Psoas muscle (tissue), 8 donors: ENCODE measurements at regions of chr10 and their contacts with region 1.

Region 1: DNA sequence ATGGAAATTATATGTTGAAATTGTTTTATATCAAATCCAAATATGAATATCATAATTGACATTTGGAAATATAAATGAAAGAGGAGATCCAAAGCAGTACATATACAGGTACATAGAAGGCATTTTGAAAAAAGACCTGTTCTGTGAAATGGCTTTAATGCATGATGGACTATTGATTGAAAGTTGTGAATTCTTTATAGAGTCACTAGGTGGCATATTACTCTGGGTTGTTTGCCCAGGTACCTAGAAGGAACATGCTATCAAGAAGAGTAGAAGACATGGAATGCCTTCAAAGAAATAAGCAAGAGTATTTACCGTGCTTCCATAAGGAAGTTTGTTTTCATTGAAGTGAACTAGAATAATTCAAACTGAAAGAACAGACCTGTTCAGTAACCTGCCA is 160.0 kb upstream of the ANK3 start:
- DNase-seq: no peak
- ATAC-seq: peak in 3 of 4 donors; percentile 55 to 84 (median 67)
- H3K4me3 ChIP-seq: no peak overlapping the region
- H3K27ac ChIP-seq: no peak overlapping the region
- H3K4me1 ChIP-seq: no peaks in the 10 kb centered on the region
- H3K27me3 ChIP-seq: no peaks in the 10 kb centered on the region
- CTCF ChIP-seq: peak; percentile 59

Region 2: GRCh38 chr10:60444494-60445064 is 105.1 kb before region 1 on chr10:
- intact Hi-C with region 1: loop called in 1 of 2 experiments (anchors 5 kb)
- DNase-seq: no peak
- ATAC-seq: no peak
- H3K4me3 ChIP-seq: no peak overlapping the region
- H3K27ac ChIP-seq: no peak overlapping the region
- H3K4me1 ChIP-seq: peaks cover 18% of the 10 kb centered on the region
- H3K27me3 ChIP-seq: no peaks in the 10 kb centered on the region
- CTCF ChIP-seq: peak; percentile 53

Region 3: DNA sequence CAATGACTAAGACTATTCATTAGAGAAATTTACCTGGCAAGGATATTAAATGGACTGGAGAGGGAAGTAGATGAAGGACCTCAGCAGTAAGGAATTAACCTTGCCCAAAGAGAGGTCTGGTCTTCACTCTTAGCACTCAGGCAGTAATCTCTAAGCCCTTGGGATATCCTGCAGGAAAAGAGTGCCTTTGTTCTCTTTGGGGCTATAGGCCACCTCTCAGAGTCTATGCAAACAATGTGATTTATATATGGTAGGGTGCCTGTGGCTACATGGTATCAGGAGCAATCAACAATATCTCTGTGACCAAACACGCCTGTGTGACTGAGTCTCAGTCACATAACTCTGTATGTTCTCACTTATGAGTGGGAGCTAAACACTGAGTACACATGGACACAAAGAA is 73.9 kb after region 1 on chr10:
- intact Hi-C with region 1: loop called in 1 of 2 experiments (anchors 5 kb)
- DNase-seq: no peak
- ATAC-seq: no peak
- H3K4me3 ChIP-seq: no peak overlapping the region
- H3K27ac ChIP-seq: no peak overlapping the region
- H3K4me1 ChIP-seq: no peaks in the 10 kb centered on the region
- H3K27me3 ChIP-seq: no peaks in the 10 kb centered on the region
- CTCF ChIP-seq: no peak

Region 4: GRCh38 chr10:60646966-60647796 is 97.5 kb after region 1 on chr10:
- intact Hi-C with region 1: loop called (anchors 2 to 5 kb)
- DNase-seq: no peak
- ATAC-seq: peak in 3 of 4 donors; percentile 58 to 86 (median 67)
- H3K4me3 ChIP-seq: no peak overlapping the region
- H3K27ac ChIP-seq: no peak overlapping the region
- H3K4me1 ChIP-seq: no peaks in the 10 kb centered on the region
- H3K27me3 ChIP-seq: no peaks in the 10 kb centered on the region
- CTCF ChIP-seq: peak; percentile 82

Region 5: GRCh38 chr10:60652628-60653027 is 102.9 kb after region 1 on chr10:
- intact Hi-C with region 1: loop called (anchors 2 to 5 kb)
- DNase-seq: no peak
- ATAC-seq: no peak
- H3K4me3 ChIP-seq: no peak overlapping the region
- H3K27ac ChIP-seq: no peak overlapping the region
- H3K4me1 ChIP-seq: no peaks in the 10 kb centered on the region
- H3K27me3 ChIP-seq: no peaks in the 10 kb centered on the region
- CTCF ChIP-seq: no peak